ENCODE measurements at regions of chr13 and their contacts with region 1.

Region 1: DNA sequence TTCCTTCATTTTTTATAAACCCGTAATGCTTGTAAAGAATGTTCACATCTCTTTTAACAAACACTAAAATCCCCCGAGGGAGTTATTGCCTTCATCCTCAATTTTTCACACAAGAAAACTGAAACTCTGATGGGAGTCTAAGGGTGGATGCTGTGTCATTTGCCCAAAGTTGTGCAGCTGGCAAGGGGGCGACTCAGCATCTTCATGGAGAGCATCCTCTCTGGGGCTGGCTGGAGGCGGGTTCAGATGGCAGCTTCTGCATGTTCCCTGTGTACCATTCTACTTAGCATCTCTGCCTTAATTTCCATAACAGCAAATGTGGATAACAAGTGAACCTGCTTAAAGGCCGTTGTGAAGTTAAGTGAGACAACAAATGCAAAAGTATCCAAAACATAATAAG is 256.4 kb downstream of the IRS2 start:
- DNase-seq: no peak
- H3K4me3 ChIP-seq: no peak overlapping the region
- H3K27ac ChIP-seq: no peak overlapping the region
- H3K4me1 ChIP-seq: no peaks in the 10 kb centered on the region
- H3K27me3 ChIP-seq: no peaks in the 10 kb centered on the region
- CTCF ChIP-seq: no peak
- POLR2A ChIP-seq: no peak

Region 2: DNA sequence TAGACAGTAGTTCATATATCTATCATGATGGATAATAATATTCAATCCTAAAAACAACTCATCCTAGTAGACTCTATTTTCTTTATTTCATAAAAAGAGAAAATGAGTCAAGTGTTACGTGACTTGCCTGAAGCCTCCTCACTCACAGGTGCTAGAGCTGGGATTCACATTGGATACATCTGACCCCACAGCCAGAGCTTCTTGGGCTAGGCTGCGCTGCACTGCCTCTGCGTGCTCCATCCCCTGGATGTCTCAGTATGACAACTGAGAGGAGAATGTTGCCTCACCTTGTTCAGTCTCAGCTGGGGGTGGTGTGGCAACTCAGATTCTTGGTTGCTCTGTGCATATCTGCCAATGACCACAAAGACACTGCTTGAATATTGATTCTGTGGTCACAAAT is 1601.2 kb before region 1 on chr13:
- intact Hi-C with region 1: no loop called
- DNase-seq: no peak
- H3K4me3 ChIP-seq: no peak overlapping the region
- H3K27ac ChIP-seq: no peak overlapping the region
- H3K4me1 ChIP-seq: no peaks in the 10 kb centered on the region
- H3K27me3 ChIP-seq: peaks cover 0 to 4% of the 10 kb centered on the region in 2 donors
- CTCF ChIP-seq: no peak
- POLR2A ChIP-seq: no peak

Region 3: DNA sequence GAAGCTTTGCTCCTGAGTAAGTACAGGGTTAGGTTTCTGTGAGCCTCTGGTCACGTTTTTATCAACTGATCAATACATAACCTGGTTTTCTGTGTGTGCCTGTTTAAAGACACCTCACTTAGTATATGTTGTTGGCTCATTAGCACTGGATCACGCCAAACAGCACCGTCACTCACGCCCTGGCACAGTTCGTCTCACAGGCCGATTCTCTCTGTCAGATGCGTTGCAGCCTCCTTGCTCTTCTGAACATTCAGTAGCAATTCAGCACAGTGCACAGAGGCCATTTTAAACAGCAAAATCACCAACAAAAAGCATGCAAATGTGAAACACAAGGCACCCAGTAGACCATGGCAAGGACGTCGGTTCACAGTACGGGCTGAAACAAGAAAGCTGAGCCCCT is 32.0 kb before region 1 on chr13:
- intact Hi-C with region 1: loop called (anchors 2 kb)
- DNase-seq: no peak
- H3K4me3 ChIP-seq: no peak overlapping the region
- H3K27ac ChIP-seq: no peak overlapping the region
- H3K4me1 ChIP-seq: no peaks in the 10 kb centered on the region
- H3K27me3 ChIP-seq: no peaks in the 10 kb centered on the region
- CTCF ChIP-seq: no peak
- POLR2A ChIP-seq: no peak

Measured in breast epithelium (tissue), 4 donors.